ENCODE measurements at regions of chr12 and their contacts with region 1.

Region 1: DNA sequence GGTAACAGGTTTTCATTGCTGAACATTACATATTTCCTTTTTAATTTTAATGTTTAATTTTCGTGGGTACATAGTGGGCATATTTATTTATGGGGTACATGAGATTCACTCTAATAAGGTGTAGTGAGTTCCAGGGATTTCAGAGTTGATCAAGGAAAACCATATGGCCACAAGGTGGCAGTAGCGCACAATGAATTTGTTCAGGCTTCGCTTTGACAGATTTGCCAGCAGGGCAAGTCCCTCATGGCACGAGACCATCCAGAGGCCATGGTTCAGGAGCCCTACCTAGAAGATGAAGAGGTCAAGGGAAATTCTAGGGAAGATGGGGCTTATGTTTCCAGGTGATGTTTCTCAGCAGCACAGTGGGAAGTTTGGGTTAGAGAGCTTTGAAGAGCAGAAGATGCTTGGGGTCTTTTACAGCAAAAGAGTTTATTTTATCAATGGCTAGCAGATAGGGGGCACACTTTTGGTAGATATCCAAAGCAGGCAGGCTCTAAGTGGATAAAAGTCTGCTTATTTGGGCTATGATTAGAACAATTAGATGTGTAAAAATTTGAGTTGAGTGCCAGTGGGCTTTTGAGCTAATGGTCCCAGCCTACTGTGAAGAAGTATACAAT is 1004.4 kb downstream of the AACS start:
- DNase-seq: no peak
- ATAC-seq: no peak

Region 2: DNA sequence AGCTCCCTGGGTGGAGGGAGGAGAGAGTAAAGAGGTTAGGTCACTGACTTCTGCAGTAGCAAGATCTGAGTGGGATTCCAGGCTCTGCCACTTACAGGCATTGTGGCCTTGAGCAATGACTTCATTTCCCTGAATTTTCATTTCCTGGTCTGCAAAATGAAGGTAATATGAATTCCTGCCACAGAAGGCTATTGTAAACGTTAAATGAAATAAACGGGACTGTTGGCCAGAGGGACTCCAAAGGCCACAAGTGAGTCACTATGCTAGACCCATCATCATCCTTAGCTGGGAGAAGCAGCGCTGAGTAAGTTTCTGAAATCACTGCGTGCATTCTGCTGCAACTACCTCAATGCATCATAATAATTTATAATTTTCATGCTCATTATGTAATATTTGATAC is 196.6 kb before region 1 on chr12:
- intact Hi-C with region 1: loop called in 1 of 2 experiments (anchors 10 kb)
- DNase-seq: no peak
- ATAC-seq: no peak

Region 3: GRCh38 chr12:125983093-125983783 is 86.4 kb before region 1 on chr12:
- intact Hi-C with region 1: no loop called
- DNase-seq: peak; percentile 61
- ATAC-seq: peak; percentile 83 to 95

Region 4: DNA sequence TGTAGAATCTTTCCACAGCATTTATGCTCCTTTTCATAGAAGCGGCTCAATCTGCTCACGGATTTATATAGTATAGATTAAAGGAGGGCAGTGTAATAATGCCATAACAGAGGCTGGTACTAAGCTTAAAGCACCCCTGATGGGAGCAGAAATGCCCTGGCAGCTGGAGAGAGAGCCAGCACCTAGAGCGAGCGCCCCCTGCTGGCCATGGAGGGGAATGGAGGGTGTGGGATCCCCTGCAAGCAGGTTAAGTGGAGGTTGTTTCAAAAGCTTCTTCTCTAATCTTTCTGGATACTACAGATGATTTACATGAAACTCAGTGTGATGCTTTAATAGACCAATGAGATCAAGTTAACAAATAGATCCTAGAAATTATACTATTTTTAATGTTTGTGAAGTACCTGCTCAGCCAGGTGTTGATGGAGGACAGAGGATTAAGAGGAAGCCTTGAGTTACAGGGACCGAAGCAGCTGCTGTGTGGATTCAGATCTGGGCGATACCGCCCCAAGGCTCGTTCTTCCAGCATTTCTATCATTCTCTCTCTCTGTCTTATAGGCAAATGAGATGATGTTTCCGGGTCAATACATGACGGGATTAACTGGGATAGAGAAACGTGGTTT is 678.0 kb after region 1 on chr12:
- intact Hi-C with region 1: loop called in 1 of 2 experiments (anchors 5 kb)
- DNase-seq: peak; percentile 37
- ATAC-seq: peak in 1 of 2 donors; percentile 49

Measured in left cardiac atrium (tissue), 4 donors.